B cell (primary cell): ENCODE measurements at regions of chr6 and their contacts with region 1.

Region 1: GRCh38 chr6:25017932-25018567 is 82.3 kb upstream of the RIPOR2 start:
- DNase-seq: peak; percentile 87
- ATAC-seq: peak; percentile 79
- H3K4me3 ChIP-seq: no peak overlapping the region
- H3K4me3 Mint-ChIP-seq: peak overlapping the region; percentile 48
- H3K27ac ChIP-seq: peak overlapping the region; percentile 46 to 86
- H3K27ac Mint-ChIP-seq: peak overlapping the region; percentile 72
- H3K4me1 ChIP-seq: peaks cover 42 to 49% of the 10 kb centered on the region in 2 donors
- H3K4me1 Mint-ChIP-seq: peaks cover 44% of the 10 kb centered on the region
- H3K27me3 ChIP-seq: no peaks in the 10 kb centered on the region
- H3K27me3 Mint-ChIP-seq: no peaks in the 10 kb centered on the region
- CTCF ChIP-seq: peak; percentile 87

Region 2: GRCh38 chr6:24720604-24721460 is 297.2 kb before region 1 on chr6:
- CTCF ChIA-PET with region 1: interaction called, 8 read pairs
- POLR2A ChIA-PET with region 1: no interaction called
- intact Hi-C with region 1: loop called (anchors 5 kb)
- DNase-seq: peak; percentile 100
- ATAC-seq: peak; percentile 80
- H3K4me3 ChIP-seq: peak overlapping the region; percentile 87 to 99 (median 88)
- H3K4me3 Mint-ChIP-seq: peak overlapping the region; percentile 89
- H3K27ac ChIP-seq: peak overlapping the region; percentile 99
- H3K27ac Mint-ChIP-seq: peak overlapping the region; percentile 100
- H3K4me1 ChIP-seq: peaks cover 40 to 41% of the 10 kb centered on the region in 2 donors
- H3K4me1 Mint-ChIP-seq: peaks cover 46% of the 10 kb centered on the region
- H3K27me3 ChIP-seq: no peaks in the 10 kb centered on the region
- H3K27me3 Mint-ChIP-seq: no peaks in the 10 kb centered on the region
- CTCF ChIP-seq: no peak

Region 3: DNA sequence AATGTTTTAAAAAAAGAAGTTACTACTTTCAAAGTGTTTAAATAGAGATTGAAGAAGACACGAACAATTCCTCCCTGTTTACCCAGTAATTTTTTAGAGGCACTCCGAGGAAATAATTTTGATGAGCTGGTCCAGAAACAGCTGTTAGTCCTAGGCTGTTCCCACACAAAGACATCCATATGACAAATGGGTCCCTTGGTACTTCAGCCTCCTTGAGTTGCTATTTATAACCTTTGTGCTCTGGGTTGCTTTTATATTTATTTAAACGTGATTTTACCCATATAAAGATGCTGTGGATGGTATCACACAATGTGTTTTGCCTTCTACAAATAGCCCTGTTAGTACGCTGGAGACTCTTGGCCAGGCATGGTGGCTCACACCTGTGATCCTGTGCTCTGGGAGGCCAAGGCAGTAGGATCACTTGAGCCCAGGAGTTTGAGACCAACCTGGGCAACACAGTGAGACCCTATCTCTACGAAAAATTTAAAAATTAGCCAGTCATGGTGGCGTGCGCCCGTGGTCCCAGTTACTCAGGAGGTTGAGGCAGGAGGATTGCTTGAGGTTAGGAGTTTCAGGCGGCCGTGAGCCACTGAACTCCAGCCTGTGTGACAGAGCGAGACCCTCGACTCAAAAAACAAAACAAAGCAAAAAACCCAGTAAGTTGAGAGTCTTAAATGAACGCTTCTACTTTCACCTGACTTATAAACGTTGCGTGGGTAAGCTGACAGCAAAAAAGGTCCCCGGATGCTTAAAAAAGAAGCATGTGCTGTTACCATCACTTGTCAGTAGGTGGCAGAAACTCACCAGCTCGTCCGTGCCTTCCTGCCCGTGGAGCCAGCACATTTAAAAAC is 162.4 kb before region 1 on chr6:
- CTCF ChIA-PET with region 1: interaction called, 216 read pairs
- POLR2A ChIA-PET with region 1: interaction called, 19 read pairs
- intact Hi-C with region 1: loop called (anchors 1 kb)
- DNase-seq: peak; percentile 86
- ATAC-seq: peak; percentile 42
- H3K4me3 ChIP-seq: no peak overlapping the region
- H3K4me3 Mint-ChIP-seq: peak overlapping the region; percentile 46
- H3K27ac ChIP-seq: peak overlapping the region; percentile 60 to 80
- H3K27ac Mint-ChIP-seq: peak overlapping the region; percentile 97
- H3K4me1 ChIP-seq: peaks cover 62% of the 10 kb centered on the region in 2 donors
- H3K4me1 Mint-ChIP-seq: peaks cover 60% of the 10 kb centered on the region
- H3K27me3 ChIP-seq: no peaks in the 10 kb centered on the region
- H3K27me3 Mint-ChIP-seq: no peaks in the 10 kb centered on the region
- CTCF ChIP-seq: peak; percentile 86

Region 4: GRCh38 chr6:24883618-24884017 is 134.4 kb before region 1 on chr6:
- CTCF ChIA-PET with region 1: interaction called, 14 read pairs
- POLR2A ChIA-PET with region 1: interaction called, 4 read pairs
- intact Hi-C with region 1: no loop called
- DNase-seq: peak; percentile 27
- ATAC-seq: no peak
- H3K4me3 ChIP-seq: no peak overlapping the region
- H3K4me3 Mint-ChIP-seq: peak overlapping the region; percentile 76
- H3K27ac ChIP-seq: peak overlapping the region; percentile 26 to 84
- H3K27ac Mint-ChIP-seq: peak overlapping the region; percentile 87
- H3K4me1 ChIP-seq: peaks cover 69 to 74% of the 10 kb centered on the region in 2 donors
- H3K4me1 Mint-ChIP-seq: peaks cover 87% of the 10 kb centered on the region
- H3K27me3 ChIP-seq: no peaks in the 10 kb centered on the region
- H3K27me3 Mint-ChIP-seq: no peaks in the 10 kb centered on the region
- CTCF ChIP-seq: no peak

Region 5: GRCh38 chr6:24910961-24911712 is 106.9 kb before region 1 on chr6:
- CTCF ChIA-PET with region 1: interaction called, 80 read pairs
- POLR2A ChIA-PET with region 1: interaction called, 9 read pairs
- intact Hi-C with region 1: loop called (anchors 1 kb)
- DNase-seq: no peak
- ATAC-seq: peak; percentile 38
- H3K4me3 ChIP-seq: peak overlapping the region; percentile 45 to 66 (median 58)
- H3K4me3 Mint-ChIP-seq: peak overlapping the region; percentile 90
- H3K27ac ChIP-seq: peak overlapping the region; percentile 83 to 93
- H3K27ac Mint-ChIP-seq: peak overlapping the region; percentile 89
- H3K4me1 ChIP-seq: peaks cover 97 to 98% of the 10 kb centered on the region in 2 donors
- H3K4me1 Mint-ChIP-seq: peaks cover 94% of the 10 kb centered on the region
- H3K27me3 ChIP-seq: no peaks in the 10 kb centered on the region
- H3K27me3 Mint-ChIP-seq: no peaks in the 10 kb centered on the region
- CTCF ChIP-seq: no peak

Region 6: GRCh38 chr6:24991810-24992467 is 26.1 kb before region 1 on chr6:
- CTCF ChIA-PET with region 1: interaction called, 186 read pairs
- POLR2A ChIA-PET with region 1: interaction called, 6 read pairs
- intact Hi-C with region 1: loop called (anchors 1 kb)
- DNase-seq: peak; percentile 88
- ATAC-seq: peak; percentile 87
- H3K4me3 ChIP-seq: peak overlapping the region in 3 of 5 experiments; percentile 13 to 27 (median 17)
- H3K4me3 Mint-ChIP-seq: peak overlapping the region; percentile 58
- H3K27ac ChIP-seq: peak overlapping the region; percentile 48 to 83
- H3K27ac Mint-ChIP-seq: peak overlapping the region; percentile 90
- H3K4me1 ChIP-seq: peaks cover 53 to 63% of the 10 kb centered on the region in 2 donors
- H3K4me1 Mint-ChIP-seq: peaks cover 75% of the 10 kb centered on the region
- H3K27me3 ChIP-seq: no peaks in the 10 kb centered on the region
- H3K27me3 Mint-ChIP-seq: no peaks in the 10 kb centered on the region
- CTCF ChIP-seq: peak; percentile 86

Region 7: DNA sequence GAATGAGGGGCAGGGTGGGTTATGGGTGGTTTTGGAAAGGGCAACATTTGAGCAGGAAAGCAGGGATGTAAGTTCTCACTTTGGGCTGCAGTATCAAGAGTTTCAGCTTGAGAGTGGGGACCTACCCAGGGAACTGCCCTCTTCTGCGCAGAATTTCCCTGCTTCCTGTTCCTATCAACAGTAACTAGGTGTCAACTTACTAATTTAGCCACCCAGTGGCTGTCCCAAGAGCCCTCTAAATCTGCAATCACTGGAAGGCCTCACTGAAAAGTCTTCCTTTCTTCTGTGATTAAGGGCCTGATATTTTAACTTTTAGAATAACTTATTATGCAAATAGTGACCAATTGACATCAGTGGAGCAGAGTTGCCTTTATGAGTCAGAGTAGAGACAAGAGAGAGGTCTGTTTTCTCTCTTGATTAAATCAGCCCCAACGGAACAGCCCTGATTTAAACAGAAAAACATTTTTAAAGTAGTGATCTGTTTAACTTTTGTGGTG is 35.9 kb after region 1 on chr6:
- CTCF ChIA-PET with region 1: interaction called, 9 read pairs
- POLR2A ChIA-PET with region 1: no interaction called
- intact Hi-C with region 1: loop called (anchors 5 kb)
- DNase-seq: peak; percentile 79
- ATAC-seq: peak; percentile 63
- H3K4me3 ChIP-seq: peak overlapping the region in 1 of 5 experiments; percentile 3
- H3K4me3 Mint-ChIP-seq: peak overlapping the region; percentile 66
- H3K27ac ChIP-seq: peak overlapping the region; percentile 71 to 76
- H3K27ac Mint-ChIP-seq: peak overlapping the region; percentile 93
- H3K4me1 ChIP-seq: peaks cover 92 to 94% of the 10 kb centered on the region in 2 donors
- H3K4me1 Mint-ChIP-seq: peaks cover 85% of the 10 kb centered on the region
- H3K27me3 ChIP-seq: no peaks in the 10 kb centered on the region
- H3K27me3 Mint-ChIP-seq: no peaks in the 10 kb centered on the region
- CTCF ChIP-seq: peak; percentile 34

Region 8: DNA sequence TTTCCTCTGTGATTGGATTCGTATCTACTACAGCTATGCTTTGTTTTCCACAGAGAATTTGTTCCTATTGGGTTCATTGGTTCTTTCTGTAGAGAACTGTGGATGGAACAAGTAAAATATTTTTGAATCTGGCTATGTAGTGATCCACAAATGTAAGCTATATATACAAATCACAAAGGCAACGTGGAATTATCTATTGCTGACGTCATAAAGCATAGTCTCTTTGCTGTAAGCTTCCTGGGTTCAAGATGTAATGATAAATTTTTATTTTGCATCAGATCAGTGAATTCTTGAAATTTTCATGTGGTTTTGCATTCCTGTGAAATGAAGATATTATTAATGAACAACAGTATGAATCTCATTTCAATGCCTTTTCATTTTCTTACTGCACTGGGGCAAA is 63.5 kb after region 1 on chr6:
- CTCF ChIA-PET with region 1: no interaction called
- POLR2A ChIA-PET with region 1: no interaction called
- intact Hi-C with region 1: no loop called
- DNase-seq: no peak
- ATAC-seq: no peak
- H3K4me3 ChIP-seq: no peak overlapping the region
- H3K4me3 Mint-ChIP-seq: no peak overlapping the region
- H3K27ac ChIP-seq: no peak overlapping the region
- H3K27ac Mint-ChIP-seq: no peak overlapping the region
- H3K4me1 ChIP-seq: peaks cover 16 to 17% of the 10 kb centered on the region in 2 donors
- H3K4me1 Mint-ChIP-seq: peaks cover 10% of the 10 kb centered on the region
- H3K27me3 ChIP-seq: no peaks in the 10 kb centered on the region
- H3K27me3 Mint-ChIP-seq: no peaks in the 10 kb centered on the region
- CTCF ChIP-seq: no peak